ENCODE measurements at regions of chr4 and their contacts with region 1.

Region 1: GRCh38 chr4:150297861-150298474 is 219.7 kb downstream of the DCLK2 start:
- DNase-seq: peak; percentile 38
- H3K4me3 ChIP-seq: no peak overlapping the region
- H3K27ac ChIP-seq: no peak overlapping the region
- H3K27me3 ChIP-seq: no peaks in the 10 kb centered on the region
- CTCF ChIP-seq: peak; percentile 79

Region 2: GRCh38 chr4:149765630-149766029 is 532.3 kb before region 1 on chr4:
- CTCF ChIA-PET with region 1: no interaction called
- POLR2A ChIA-PET with region 1: no interaction called
- DNase-seq: no peak
- H3K4me3 ChIP-seq: no peak overlapping the region
- H3K27ac ChIP-seq: no peak overlapping the region
- H3K27me3 ChIP-seq: no peaks in the 10 kb centered on the region
- CTCF ChIP-seq: no peak

Region 3: DNA sequence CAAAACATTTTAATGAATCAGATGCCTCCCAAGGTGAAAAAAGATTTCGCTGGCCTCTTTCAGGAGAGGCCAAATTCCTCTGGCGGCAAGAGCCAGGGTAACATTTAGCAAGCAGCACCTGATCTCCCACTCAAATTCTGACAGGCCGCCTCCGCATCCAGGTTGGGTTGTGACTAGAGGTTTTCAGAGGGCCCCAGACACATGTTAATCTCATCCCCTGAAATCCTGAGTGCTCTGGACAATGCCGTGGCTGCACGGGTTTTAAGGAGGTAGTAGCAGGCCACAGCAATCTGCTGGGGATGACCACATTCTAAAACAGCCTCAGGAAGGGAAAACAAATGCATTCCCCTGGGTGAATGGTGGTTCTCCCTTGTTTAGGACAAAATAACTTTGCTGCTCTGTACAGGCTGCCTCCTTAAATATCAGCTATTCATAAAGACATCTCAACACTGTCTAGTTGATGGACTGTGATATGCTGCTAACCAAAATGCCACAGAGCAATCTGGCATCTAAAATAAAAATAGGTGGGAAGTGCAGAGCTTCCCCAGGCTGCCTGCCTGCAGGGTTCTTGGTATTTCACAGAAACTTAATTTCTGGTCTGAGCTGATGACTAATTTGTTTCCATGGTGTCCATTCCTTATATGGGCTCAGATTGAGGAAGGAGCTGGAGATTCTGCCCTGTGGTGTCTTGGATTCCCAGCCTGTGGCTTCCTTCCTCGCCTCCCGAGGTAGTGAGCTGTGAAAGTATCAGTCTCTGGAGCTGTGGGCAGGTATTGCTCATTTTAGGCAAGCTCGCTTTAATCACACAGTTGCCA is 17.7 kb before region 1 on chr4:
- CTCF ChIA-PET with region 1: interaction called, 14 read pairs
- POLR2A ChIA-PET with region 1: no interaction called
- DNase-seq: peak; percentile 63
- H3K4me3 ChIP-seq: no peak overlapping the region
- H3K27ac ChIP-seq: peak overlapping the region; percentile 91
- H3K27me3 ChIP-seq: no peaks in the 10 kb centered on the region
- CTCF ChIP-seq: no peak

Region 4: GRCh38 chr4:150593996-150594395 is 296.0 kb after region 1 on chr4:
- CTCF ChIA-PET with region 1: interaction called, 21 read pairs
- POLR2A ChIA-PET with region 1: no interaction called
- DNase-seq: no peak
- H3K4me3 ChIP-seq: no peak overlapping the region
- H3K27ac ChIP-seq: no peak overlapping the region
- H3K27me3 ChIP-seq: no peaks in the 10 kb centered on the region
- CTCF ChIP-seq: peak; percentile 52; the same call in 1 of the 2 replicates